B cell (primary cell): ENCODE measurements at regions of chr3 and their contacts with region 1.

Region 1: GRCh38 chr3:170357176-170357919 is at the start of gene SKIL:
- DNase-seq: peak; percentile 99
- ATAC-seq: peak; percentile 56
- H3K4me3 ChIP-seq: peak within 1 kb of the TSS; percentile 70 to 90 (median 82)
- H3K4me3 Mint-ChIP-seq: peak within 1 kb of the TSS; percentile 91
- H3K27ac ChIP-seq: peak within 1 kb of the TSS; percentile 93 to 100
- H3K27ac Mint-ChIP-seq: peak within 1 kb of the TSS; percentile 99
- H3K4me1 ChIP-seq: peaks cover 70 to 71% of the 10 kb centered on the region in 2 donors
- H3K4me1 Mint-ChIP-seq: peaks cover 72% of the 10 kb centered on the region
- H3K27me3 ChIP-seq: no peaks in the 10 kb centered on the region
- H3K27me3 Mint-ChIP-seq: no peaks in the 10 kb centered on the region
- CTCF ChIP-seq: no peak
- total RNA-seq, gene SKIL: 145 and 148 TPM in 2 replicates

Region 2: DNA sequence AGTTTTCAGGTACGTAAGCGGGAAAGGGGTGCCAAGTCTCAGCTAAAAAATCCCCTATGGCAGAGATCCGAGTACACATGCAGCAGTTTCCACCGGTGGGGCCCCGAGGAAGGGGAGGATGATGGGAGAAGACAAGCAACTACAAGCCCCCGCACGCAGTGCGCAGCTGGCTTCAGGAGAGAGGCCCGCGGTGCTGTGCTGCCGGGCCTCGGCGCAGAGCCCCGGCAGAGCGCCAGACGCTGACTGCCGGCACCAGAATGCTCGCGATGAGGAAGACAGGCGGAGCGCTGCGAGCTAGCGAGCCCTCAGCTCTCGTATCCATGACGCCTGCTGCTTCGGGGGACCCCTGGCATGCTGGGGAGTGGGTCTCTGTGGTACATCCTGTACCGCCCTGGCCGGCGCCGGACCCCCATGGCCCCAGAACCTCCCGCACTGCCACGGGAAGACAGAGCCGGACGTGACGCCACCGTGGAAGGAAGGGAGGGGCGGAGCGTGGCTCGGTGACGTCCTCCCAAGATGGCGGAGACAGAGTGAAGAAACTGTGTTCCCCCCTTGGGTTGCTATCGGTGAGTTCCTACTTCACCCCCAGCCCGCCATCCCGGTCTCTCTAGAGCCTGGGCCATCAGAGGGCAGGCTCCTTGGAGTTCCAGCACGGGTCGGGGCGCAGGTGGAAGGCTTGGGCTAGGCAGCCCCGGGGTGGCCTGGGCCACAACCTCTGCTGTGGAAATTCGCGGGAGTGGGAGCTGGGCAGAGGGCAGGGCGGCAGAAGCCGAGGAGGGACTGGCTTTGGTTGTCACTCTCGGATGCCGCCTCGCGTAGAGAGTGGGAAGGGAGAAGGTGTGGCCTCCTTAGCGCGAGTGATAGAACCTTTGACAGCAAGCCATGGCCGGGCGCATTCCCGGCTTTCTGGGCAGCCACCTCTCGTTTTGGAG is 584.2 kb before region 1 on chr3 and contains the start of gene MYNN:
- CTCF ChIA-PET with region 1: interaction called, 3 read pairs
- POLR2A ChIA-PET with region 1: interaction called, 23 read pairs
- intact Hi-C with region 1: loop called (anchors 1 kb)
- DNase-seq: peak; percentile 96
- ATAC-seq: peak; percentile 78
- H3K4me3 ChIP-seq: peak within 1 kb of the TSS; percentile 89 to 97 (median 91)
- H3K4me3 Mint-ChIP-seq: peak within 1 kb of the TSS; percentile 100
- H3K27ac ChIP-seq: peak within 1 kb of the TSS; percentile 97
- H3K27ac Mint-ChIP-seq: peak within 1 kb of the TSS; percentile 99
- H3K4me1 ChIP-seq: peaks cover 16 to 19% of the 10 kb centered on the region in 2 donors
- H3K4me1 Mint-ChIP-seq: peaks cover 50% of the 10 kb centered on the region
- H3K27me3 ChIP-seq: no peaks in the 10 kb centered on the region
- H3K27me3 Mint-ChIP-seq: no peaks in the 10 kb centered on the region
- CTCF ChIP-seq: no peak
- total RNA-seq, gene MYNN: 24.0 and 25.5 TPM in 2 replicates

Region 3: GRCh38 chr3:169945313-169945712 is 412.0 kb before region 1 on chr3:
- CTCF ChIA-PET with region 1: no interaction called
- POLR2A ChIA-PET with region 1: interaction called, 4 read pairs
- intact Hi-C with region 1: loop called (anchors 5 kb)
- DNase-seq: peak; percentile 93
- ATAC-seq: peak; percentile 91
- H3K4me3 ChIP-seq: peak overlapping the region in 3 of 5 experiments; percentile 13 to 38 (median 15)
- H3K4me3 Mint-ChIP-seq: peak overlapping the region; percentile 79
- H3K27ac ChIP-seq: peak overlapping the region; percentile 79 to 81
- H3K27ac Mint-ChIP-seq: peak overlapping the region; percentile 91
- H3K4me1 ChIP-seq: peaks cover 82 to 88% of the 10 kb centered on the region in 2 donors
- H3K4me1 Mint-ChIP-seq: peaks cover 87% of the 10 kb centered on the region
- H3K27me3 ChIP-seq: no peaks in the 10 kb centered on the region
- H3K27me3 Mint-ChIP-seq: no peaks in the 10 kb centered on the region
- CTCF ChIP-seq: peak; percentile 11

Region 4: DNA sequence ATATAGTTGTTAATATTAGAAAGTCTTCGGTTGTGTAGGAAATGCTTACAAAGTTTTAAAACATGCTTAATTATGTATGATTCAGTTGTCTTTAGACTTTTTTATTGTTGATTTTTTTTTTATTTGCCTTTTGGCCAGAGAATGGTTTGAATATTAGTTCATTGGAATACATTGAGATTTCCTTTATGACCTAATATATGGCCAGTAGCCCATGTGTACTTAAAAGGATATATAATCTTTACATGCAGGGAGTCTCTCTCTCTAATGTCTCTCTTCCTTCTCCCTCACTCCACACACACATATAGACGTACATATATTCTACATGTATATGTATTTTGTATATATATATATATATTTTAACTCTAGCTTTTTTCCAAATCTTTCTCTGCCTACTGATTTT is 67.2 kb before region 1 on chr3:
- CTCF ChIA-PET with region 1: no interaction called
- POLR2A ChIA-PET with region 1: no interaction called
- intact Hi-C with region 1: no loop called
- DNase-seq: no peak
- ATAC-seq: no peak
- H3K4me3 ChIP-seq: no peak overlapping the region
- H3K4me3 Mint-ChIP-seq: no peak overlapping the region
- H3K27ac ChIP-seq: no peak overlapping the region
- H3K27ac Mint-ChIP-seq: no peak overlapping the region
- H3K4me1 ChIP-seq: no peaks in the 10 kb centered on the region
- H3K4me1 Mint-ChIP-seq: no peaks in the 10 kb centered on the region
- H3K27me3 ChIP-seq: no peaks in the 10 kb centered on the region
- H3K27me3 Mint-ChIP-seq: no peaks in the 10 kb centered on the region
- CTCF ChIP-seq: no peak

Region 5: GRCh38 chr3:170307671-170308403 is 49.5 kb before region 1 on chr3:
- CTCF ChIA-PET with region 1: interaction called, 27 read pairs
- POLR2A ChIA-PET with region 1: interaction called, 7 read pairs
- intact Hi-C with region 1: loop called (anchors 1 kb)
- DNase-seq: no peak
- ATAC-seq: no peak
- H3K4me3 ChIP-seq: no peak overlapping the region
- H3K4me3 Mint-ChIP-seq: no peak overlapping the region
- H3K27ac ChIP-seq: no peak overlapping the region
- H3K27ac Mint-ChIP-seq: no peak overlapping the region
- H3K4me1 ChIP-seq: peaks cover 6 to 10% of the 10 kb centered on the region in 2 donors
- H3K4me1 Mint-ChIP-seq: peaks cover 5% of the 10 kb centered on the region
- H3K27me3 ChIP-seq: no peaks in the 10 kb centered on the region
- H3K27me3 Mint-ChIP-seq: no peaks in the 10 kb centered on the region
- CTCF ChIP-seq: no peak

Region 6: DNA sequence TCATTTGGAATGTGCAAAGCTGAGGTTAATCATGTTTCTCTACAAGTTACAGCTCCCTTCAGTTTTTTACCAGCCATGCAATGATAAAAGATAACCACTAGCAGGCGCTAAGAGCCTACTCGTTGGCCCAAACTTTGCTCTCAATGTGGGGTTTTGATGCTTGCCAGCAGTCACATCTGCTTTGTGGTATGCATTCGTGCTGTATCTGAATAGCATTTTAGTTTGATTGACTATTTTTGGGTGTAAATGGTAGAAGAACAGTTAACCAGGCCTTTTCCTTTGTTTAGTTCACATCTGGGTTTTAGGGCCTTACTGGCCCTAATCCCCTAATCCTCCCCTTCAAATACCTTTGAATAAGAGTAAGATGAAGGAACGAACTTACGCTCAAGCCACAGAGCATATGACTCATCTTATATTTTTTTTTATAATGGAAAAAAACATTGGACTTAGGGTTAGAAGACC is 56.9 kb after region 1 on chr3:
- CTCF ChIA-PET with region 1: interaction called, 53 read pairs
- POLR2A ChIA-PET with region 1: interaction called, 5 read pairs
- intact Hi-C with region 1: loop called (anchors 5 kb)
- DNase-seq: peak; percentile 65
- ATAC-seq: peak; percentile 58
- H3K4me3 ChIP-seq: no peak overlapping the region
- H3K4me3 Mint-ChIP-seq: no peak overlapping the region
- H3K27ac ChIP-seq: no peak overlapping the region
- H3K27ac Mint-ChIP-seq: no peak overlapping the region
- H3K4me1 ChIP-seq: peaks cover 10 to 11% of the 10 kb centered on the region in 2 donors
- H3K4me1 Mint-ChIP-seq: peaks cover 10% of the 10 kb centered on the region
- H3K27me3 ChIP-seq: peaks cover 0 to 18% (median 12%) of the 10 kb centered on the region in 4 experiments
- H3K27me3 Mint-ChIP-seq: peaks cover 22% of the 10 kb centered on the region
- CTCF ChIP-seq: peak; percentile 92

Region 7: DNA sequence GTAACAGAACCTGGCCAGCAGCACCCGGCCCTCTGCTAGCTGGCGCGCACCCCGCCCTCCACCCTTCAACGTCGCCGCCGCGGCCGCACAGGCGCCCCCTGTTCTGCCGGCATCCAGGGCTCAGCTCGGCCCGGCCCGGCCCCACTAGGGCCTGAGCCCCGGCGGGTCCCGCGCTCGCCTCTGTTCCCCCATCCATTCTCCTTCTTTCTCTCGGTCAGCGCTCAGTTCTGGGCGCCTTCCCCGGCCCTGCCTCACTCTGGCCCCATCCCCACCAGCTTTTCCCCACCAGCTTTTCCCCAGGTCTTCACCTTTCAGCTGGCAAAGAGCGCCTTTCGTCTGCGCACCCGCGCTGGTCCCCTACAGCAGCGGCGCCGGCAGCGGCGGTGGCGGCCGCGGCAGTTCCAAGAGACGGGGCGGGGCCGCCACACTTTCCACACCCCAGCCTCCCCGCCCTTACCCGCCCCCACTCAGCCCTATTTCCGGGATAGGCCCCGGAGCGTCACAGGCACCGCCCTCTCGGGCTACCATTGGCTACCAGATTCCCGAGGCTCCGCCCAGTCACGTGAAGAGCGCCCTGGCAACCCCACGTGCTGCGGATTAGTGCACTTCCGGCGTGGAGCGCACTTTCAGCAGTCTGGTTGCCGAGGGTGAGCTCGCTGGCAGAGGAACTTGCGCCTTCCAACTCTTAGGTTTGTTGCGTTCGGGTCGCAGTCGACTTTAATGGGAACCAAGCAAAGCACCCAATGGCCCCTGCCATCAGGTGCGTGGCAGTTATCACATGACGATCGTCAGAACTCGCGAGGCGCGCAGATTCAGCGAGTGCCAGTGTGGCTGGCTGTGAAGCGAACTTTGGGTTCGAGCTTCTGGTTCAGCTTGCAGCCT is 551.1 kb after region 1 on chr3 and contains the start of gene EIF5A2:
- CTCF ChIA-PET with region 1: no interaction called
- POLR2A ChIA-PET with region 1: no interaction called
- intact Hi-C with region 1: loop called (anchors 2 kb)
- DNase-seq: peak; percentile 93
- ATAC-seq: peak; percentile 94
- H3K4me3 ChIP-seq: peak within 1 kb of the TSS; percentile 58 to 79 (median 67)
- H3K4me3 Mint-ChIP-seq: peak within 1 kb of the TSS; percentile 96
- H3K27ac ChIP-seq: peak within 1 kb of the TSS; percentile 7 to 68
- H3K27ac Mint-ChIP-seq: peak within 1 kb of the TSS; percentile 86
- H3K4me1 ChIP-seq: peaks cover 13 to 16% of the 10 kb centered on the region in 2 donors
- H3K4me1 Mint-ChIP-seq: peaks cover 22% of the 10 kb centered on the region
- H3K27me3 ChIP-seq: no peaks in the 10 kb centered on the region
- H3K27me3 Mint-ChIP-seq: no peaks in the 10 kb centered on the region
- CTCF ChIP-seq: no peak
- total RNA-seq, gene EIF5A2: 4.1 and 6.3 TPM in 2 replicates